MCF 10A (cell line): ENCODE measurements at regions of chr11 and their contacts with region 1.

Region 1: GRCh38 chr11:128630367-128631230 is 43.2 kb upstream of the ETS1 start:
- DNase-seq: peak; percentile 90
- H3K4me3 Mint-ChIP-seq: no peak overlapping the region
- H3K27ac Mint-ChIP-seq: no peak overlapping the region
- H3K4me1 Mint-ChIP-seq: no peaks in the 10 kb centered on the region
- H3K27me3 Mint-ChIP-seq: no peaks in the 10 kb centered on the region
- CTCF ChIP-seq: peak; percentile 84

Region 2: DNA sequence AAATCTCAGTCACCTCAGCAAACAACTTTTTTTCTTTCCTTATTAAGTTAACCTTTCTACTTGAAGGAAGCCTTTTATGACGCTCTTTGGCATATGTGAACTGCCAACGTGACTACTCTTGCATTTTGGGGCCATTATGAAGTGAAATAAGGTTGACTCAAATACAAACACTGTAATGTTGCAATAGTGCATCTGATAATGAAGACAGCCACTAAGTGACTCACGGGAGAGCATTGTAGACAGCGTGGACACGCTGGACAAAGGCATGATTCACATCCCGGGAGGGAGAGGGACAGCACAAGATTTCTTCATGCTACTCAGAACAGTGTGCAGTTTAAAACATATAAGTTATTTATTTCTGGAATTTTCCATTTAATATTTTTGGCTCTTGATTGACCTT is 604.0 kb before region 1 on chr11:
- CTCF ChIA-PET with region 1: interaction called, 8 read pairs
- POLR2A ChIA-PET with region 1: no interaction called
- intact Hi-C with region 1: loop called (anchors 1 kb)
- DNase-seq: peak; percentile 98
- H3K4me3 Mint-ChIP-seq: peak overlapping the region; percentile 30
- H3K27ac Mint-ChIP-seq: peak overlapping the region; percentile 28
- H3K4me1 Mint-ChIP-seq: peaks cover 42% of the 10 kb centered on the region
- H3K27me3 Mint-ChIP-seq: no peaks in the 10 kb centered on the region
- CTCF ChIP-seq: no peak

Region 3: DNA sequence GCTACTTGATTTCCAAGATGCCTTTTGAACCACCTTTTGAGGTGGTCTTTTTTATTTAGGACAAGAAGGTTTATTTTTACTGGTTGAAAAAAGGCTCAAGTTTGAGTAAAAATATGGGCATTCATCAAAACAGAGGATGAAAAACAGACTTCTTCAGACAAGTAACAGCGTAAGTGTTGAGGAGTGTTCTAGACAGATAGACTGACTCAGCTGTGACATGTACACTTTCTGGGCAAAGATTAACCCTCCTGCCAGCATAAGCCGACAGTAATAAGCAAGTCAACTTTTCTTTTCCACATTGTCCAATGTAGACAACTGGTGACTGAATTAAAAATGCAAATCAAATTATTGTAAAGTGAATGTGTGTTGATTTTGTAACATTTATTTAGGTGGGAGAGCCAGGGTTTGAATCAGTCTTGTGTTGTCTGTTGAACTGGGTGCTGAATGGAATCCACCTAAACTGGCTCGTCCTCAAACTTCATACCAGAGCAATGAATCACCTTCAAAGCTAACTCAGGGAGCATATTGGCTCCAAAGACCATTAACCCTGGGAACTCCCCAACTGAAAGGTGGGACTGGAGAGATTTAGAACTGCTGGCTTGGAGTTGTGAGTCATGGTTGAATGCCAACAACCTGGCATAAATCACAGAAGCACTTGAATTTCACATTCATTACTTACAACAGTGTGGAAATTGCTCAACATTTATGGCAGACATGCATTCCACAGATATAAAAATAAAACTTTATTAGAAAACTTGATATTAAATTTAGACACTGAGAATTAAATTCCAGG is 420.3 kb before region 1 on chr11:
- CTCF ChIA-PET with region 1: no interaction called
- POLR2A ChIA-PET with region 1: no interaction called
- intact Hi-C with region 1: loop called (anchors 1 kb)
- DNase-seq: peak; percentile 100
- H3K4me3 Mint-ChIP-seq: peak overlapping the region; percentile 43
- H3K27ac Mint-ChIP-seq: peak overlapping the region; percentile 86
- H3K4me1 Mint-ChIP-seq: peaks cover 34% of the 10 kb centered on the region
- H3K27me3 Mint-ChIP-seq: no peaks in the 10 kb centered on the region
- CTCF ChIP-seq: no peak

Region 4: DNA sequence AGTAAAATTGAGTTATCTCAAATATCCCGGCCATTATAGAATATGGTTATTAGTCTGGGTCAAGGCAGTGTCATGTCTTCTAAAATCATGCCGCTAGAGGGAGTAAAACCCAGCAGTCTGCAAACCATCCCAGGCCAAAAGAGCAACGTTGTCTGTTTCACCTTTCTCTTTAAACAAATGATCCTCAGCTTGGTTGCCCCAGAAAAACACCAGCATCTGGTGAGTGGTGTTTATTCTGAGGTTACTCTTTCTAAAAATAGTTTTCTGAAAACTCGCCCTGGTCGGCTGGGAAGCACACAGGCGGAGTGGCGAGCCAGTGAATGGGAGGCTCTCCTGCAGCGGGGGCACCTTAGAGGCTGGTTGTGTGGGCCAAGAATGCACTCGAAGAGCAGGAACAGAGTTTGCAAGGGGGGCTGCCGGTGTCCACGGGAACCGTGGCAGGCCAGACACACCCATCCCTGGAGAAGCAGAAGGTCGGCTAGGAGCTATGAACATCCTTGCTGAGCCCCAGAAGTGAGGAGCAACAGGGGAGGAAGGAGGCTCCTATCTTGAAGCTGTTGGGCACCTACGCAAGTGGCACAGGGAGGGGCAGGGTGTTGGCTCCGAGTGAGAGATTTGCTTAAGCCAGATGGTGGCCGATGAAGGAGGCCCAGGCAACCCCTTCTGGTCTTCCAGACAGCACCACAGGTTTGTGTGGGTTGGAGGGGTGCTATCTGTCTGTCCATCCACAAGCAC is 340.3 kb before region 1 on chr11:
- CTCF ChIA-PET with region 1: interaction called, 160 read pairs
- POLR2A ChIA-PET with region 1: interaction called, 3 read pairs
- intact Hi-C with region 1: loop called (anchors 1 kb)
- DNase-seq: peak; percentile 72
- H3K4me3 Mint-ChIP-seq: no peak overlapping the region
- H3K27ac Mint-ChIP-seq: no peak overlapping the region
- H3K4me1 Mint-ChIP-seq: peaks cover 15% of the 10 kb centered on the region
- H3K27me3 Mint-ChIP-seq: no peaks in the 10 kb centered on the region
- CTCF ChIP-seq: peak; percentile 76

Region 5: DNA sequence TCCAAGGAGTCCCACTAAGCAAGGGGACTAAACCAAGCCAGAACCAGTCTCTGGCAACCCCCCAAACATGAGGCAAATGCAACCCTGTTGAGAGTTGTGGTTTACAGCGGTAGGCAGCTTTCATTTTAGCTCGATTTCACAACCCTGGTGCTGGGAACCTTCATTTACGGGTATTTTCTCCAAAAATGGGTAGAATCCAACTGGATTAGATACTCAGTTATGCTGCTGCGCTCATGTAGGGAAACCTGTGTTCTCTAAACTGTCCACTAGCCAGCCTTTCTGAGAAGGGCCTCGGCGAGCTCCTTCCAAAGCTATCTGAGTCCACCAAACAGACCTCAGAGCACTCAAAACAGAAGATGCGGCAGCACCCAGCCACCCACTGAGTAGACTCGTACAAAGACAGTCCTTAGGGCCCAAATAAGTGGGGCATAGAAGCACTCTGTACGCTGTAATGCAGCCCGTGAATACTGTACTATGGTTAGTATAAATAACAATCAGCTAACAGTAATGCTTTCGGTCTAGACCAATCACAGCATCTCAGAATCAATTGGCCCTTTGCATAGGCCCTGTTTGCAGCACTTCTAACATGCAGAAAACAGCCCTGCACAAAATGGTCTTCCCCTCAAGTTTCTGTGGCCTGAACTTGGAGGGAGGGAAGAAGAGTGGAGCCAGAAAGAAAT is 147.9 kb before region 1 on chr11:
- CTCF ChIA-PET with region 1: interaction called, 33 read pairs
- POLR2A ChIA-PET with region 1: no interaction called
- intact Hi-C with region 1: loop called (anchors 1 kb)
- DNase-seq: peak; percentile 78
- H3K4me3 Mint-ChIP-seq: peak overlapping the region; percentile 44
- H3K27ac Mint-ChIP-seq: peak overlapping the region; percentile 71
- H3K4me1 Mint-ChIP-seq: peaks cover 39% of the 10 kb centered on the region
- H3K27me3 Mint-ChIP-seq: no peaks in the 10 kb centered on the region
- CTCF ChIP-seq: no peak

Region 6: DNA sequence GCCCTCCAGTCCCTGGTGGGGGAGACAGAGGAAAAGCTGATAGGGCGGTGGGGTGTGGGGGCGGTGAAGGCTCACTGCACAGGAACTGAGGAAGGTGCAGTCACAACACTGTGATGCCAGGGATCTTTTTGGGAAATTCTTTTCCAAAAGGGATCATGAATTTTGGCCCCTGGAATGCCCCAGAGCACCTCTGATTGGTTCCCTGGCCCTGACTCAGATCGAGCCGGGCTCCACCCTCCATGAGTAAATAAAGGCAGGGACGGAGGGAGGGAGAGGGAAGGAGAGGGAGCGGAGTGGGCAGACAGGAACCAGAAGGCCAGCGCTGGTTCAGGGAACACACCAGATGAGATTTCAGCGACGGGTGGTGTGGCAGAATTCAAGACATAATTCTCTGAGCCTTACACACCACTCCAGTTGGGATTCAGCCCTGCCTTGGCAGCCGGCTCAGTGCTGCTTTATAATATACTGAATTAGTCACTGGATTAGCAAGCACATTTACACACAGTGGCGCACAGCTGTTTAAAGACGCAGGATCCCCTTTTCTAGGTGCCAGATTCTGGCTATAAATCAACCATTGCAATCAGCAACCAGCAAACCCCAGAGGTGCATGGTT is 123.5 kb before region 1 on chr11:
- CTCF ChIA-PET with region 1: interaction called, 4 read pairs
- POLR2A ChIA-PET with region 1: no interaction called
- intact Hi-C with region 1: loop called (anchors 5 kb)
- DNase-seq: peak; percentile 88
- H3K4me3 Mint-ChIP-seq: peak overlapping the region; percentile 64
- H3K27ac Mint-ChIP-seq: peak overlapping the region; percentile 89
- H3K4me1 Mint-ChIP-seq: peaks cover 69% of the 10 kb centered on the region
- H3K27me3 Mint-ChIP-seq: no peaks in the 10 kb centered on the region
- CTCF ChIP-seq: no peak

Region 7: DNA sequence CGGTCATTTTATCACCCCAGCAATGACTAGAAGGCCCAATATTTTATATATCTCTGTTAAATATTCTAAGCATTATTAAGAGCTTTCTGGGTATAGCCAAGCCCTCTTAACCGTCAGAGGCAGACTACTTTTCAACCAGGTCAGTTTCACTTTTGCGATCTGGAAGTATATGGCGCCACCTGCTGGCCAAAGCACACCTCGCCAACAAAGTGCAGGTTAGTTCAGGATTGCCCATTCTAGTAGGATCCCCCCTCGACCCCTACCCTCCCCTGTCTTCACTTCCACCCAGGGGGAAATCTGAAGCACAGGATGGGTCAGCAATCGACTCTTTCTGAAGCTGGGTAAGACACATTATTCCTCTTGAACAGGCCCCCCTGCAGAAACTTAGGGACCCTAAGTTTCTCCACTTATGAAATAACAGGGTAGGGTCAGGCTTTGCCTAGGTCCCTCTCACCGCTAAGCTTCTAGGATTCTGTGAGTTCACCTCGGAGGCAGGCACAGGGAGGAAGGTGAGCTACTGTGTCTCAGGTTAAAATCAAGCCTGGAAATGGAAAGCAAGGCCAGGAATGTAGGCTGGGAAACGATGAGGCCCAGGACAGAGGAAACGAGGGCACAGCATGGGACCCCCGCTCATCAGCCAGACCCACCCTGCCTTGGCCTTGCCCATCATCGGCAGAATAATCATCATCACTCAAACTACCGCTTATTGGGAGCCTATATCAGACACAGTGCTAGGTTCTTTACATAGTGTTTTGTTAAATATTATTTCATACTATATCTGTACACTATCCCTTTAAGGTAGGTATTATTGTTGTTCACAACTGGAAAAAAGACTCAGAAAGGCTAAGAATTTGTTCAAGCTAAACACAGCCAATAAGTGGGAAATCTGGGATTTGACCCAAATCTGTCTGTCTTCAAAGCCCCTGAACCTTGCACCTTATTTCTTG is 200.8 kb after region 1 on chr11:
- CTCF ChIA-PET with region 1: interaction called, 48 read pairs
- POLR2A ChIA-PET with region 1: no interaction called
- intact Hi-C with region 1: loop called (anchors 1 kb)
- DNase-seq: peak; percentile 86
- H3K4me3 Mint-ChIP-seq: no peak overlapping the region
- H3K27ac Mint-ChIP-seq: no peak overlapping the region
- H3K4me1 Mint-ChIP-seq: peaks cover 10% of the 10 kb centered on the region
- H3K27me3 Mint-ChIP-seq: no peaks in the 10 kb centered on the region
- CTCF ChIP-seq: peak; percentile 79